ENCODE measurements at regions of chr9 and their contacts with region 1.

Region 1: DNA sequence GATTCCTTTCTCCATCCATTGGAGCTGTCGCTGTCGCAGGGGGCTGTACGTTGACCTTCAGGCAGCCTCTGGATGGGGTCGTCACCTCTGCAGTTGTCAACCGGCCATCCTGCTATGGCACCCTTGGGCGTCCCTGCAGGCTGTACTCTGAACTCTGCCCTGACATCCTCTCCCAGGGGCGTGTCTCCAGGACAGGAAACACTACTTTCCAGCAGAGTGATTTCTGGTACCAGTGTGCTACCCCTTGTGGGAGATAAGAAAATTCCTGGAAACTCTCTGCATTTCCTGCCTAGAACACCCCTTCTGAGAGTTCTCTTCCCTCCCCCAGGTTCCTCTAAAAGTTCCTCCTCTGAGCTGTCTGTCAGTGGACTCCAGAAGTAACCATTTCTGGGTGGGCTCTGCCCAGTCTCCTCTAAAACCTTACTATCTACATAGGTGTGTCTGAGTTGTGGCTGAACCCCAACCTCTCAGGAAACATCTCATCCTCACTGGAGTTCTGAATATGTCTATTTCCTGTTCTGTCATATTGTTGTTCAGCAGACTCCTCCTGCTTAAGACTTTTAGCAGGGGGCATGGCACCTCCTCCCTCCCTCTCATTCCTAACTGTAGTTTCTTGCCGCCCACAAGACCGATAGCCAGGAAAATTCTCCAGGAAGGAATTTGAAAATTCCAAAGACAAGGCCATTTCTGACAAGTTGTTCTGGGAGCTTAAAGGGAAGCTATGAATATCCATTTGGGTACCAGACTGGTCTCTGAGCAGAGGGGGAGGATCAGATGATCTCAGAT is 145.3 kb upstream of the RASEF start:
- DNase-seq: no peak
- ATAC-seq: no peak
- H3K4me3 ChIP-seq: no peak overlapping the region
- H3K27ac ChIP-seq: no peak overlapping the region
- H3K4me1 ChIP-seq: no peaks in the 10 kb centered on the region
- H3K27me3 ChIP-seq: no peaks in the 10 kb centered on the region
- CTCF ChIP-seq: no peak

Region 2: DNA sequence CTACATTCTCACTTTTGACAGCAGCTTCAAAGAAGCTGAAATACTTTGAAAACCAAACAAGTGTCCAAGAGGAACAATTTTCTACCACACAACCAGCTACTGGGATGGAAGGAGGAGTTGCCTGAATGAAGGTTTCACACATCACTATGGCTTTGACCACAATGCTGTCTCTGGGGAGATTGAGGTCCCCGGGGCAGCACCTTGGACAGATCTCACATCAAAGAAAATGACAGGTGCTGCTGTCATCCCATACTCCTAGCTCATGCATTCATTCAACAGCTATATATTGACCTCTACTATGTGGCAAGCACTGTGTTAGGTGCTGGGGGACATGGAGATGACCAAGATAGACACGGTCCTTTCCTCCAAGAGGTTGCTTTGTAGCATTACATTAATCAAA is 87.9 kb after region 1 on chr9:
- CTCF ChIA-PET with region 1: no interaction called
- POLR2A ChIA-PET with region 1: no interaction called
- in situ Hi-C with region 1: no loop called
- intact Hi-C with region 1: no loop called
- DNase-seq: no peak
- ATAC-seq: no peak
- H3K4me3 ChIP-seq: no peak overlapping the region
- H3K27ac ChIP-seq: no peak overlapping the region
- H3K4me1 ChIP-seq: no peaks in the 10 kb centered on the region
- H3K27me3 ChIP-seq: no peaks in the 10 kb centered on the region
- CTCF ChIP-seq: no peak

Region 3: GRCh38 chr9:83327323-83327722 is 119.1 kb after region 1 on chr9:
- CTCF ChIA-PET with region 1: no interaction called
- POLR2A ChIA-PET with region 1: interaction called, 12 read pairs
- in situ Hi-C with region 1: no loop called
- intact Hi-C with region 1: no loop called
- DNase-seq: no peak
- ATAC-seq: no peak
- H3K4me3 ChIP-seq: no peak overlapping the region
- H3K27ac ChIP-seq: no peak overlapping the region
- H3K4me1 ChIP-seq: no peaks in the 10 kb centered on the region
- H3K27me3 ChIP-seq: no peaks in the 10 kb centered on the region
- CTCF ChIP-seq: no peak

Measured in Panc1 (cell line).